ENCODE measurements at regions of chr5 and their contacts with region 1.

Region 1: GRCh38 chr5:54243473-54244080 is 66.8 kb downstream of the ARL15 start:
- DNase-seq: peak; percentile 27
- CTCF ChIP-seq: peak; percentile 71

Region 2: GRCh38 chr5:54229041-54229780 is 14.4 kb before region 1 on chr5:
- CTCF ChIA-PET with region 1: interaction called, 17 read pairs
- POLR2A ChIA-PET with region 1: no interaction called
- DNase-seq: peak; percentile 51
- CTCF ChIP-seq: peak; percentile 91

Region 3: DNA sequence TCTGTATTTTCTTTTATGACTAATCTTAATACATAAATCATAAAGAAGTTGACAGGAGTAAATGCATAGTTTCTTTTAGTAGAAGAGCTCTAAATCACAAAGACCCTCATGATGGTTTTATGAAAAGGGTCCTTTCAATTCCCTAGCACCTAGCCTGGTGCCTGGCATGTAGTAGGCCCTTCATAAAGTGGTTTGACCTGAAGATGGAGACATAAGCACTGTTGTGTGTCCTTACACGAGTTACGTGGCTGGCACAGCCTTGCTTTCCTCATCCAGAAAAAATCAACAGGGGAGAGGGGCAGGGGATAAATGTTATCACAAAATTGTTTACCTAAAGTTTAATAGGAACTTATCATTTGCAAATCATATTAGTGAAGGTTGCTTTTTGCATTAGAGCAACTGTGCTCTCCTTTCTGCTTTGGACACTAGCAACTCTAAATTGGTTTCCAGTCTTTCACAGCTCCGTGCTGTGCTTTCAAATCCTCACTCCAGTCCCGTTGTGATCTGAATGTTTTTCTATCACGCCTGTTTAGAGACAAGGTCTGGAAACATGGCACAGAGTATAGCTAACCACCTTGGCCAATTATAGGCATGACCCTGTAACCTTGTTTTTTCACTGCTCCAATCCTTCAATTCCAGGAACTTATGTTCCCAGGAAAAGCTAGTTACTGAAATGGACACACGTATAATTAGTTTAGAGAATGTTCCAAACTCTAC is 11.1 kb after region 1 on chr5:
- CTCF ChIA-PET with region 1: interaction called, 15 read pairs
- POLR2A ChIA-PET with region 1: no interaction called
- DNase-seq: no peak
- CTCF ChIP-seq: no peak

Region 4: DNA sequence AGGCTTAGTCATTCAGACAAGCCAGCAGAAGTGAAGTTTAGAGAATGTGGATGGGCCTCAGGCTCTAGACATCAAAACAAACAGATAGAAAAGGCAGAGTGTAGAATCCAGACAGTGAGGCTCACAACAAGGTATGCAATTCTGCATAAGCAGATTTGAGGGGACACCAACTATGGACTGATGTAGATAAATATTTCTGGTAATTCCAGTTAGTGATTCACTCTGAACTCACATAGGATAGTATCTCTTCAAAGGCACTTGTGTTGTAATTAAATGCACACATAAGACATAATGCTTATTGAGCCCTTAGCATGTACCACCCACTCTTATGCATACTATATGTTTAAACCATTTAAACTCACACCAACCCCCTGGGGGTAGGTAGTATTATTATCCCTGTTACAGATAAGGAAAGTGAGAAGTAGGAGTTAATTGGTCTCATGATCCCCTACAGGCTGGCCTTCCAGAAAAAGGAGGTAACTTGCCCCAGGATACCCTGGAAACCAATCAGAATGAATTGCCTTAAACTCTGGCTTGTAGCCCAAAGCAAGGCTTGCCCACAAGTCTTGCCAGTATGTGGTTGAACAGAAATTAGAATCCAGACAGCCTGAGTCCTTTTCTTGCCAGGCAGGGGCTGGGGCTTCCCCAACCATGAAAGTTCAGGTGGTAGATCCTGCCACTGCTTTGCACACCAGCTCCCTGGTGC is 172.5 kb after region 1 on chr5:
- CTCF ChIA-PET with region 1: interaction called, 13 read pairs
- POLR2A ChIA-PET with region 1: no interaction called
- DNase-seq: no peak
- CTCF ChIP-seq: no peak

Region 5: GRCh38 chr5:54425258-54425657 is 181.7 kb after region 1 on chr5:
- CTCF ChIA-PET with region 1: interaction called, 13 read pairs
- POLR2A ChIA-PET with region 1: no interaction called
- DNase-seq: no peak
- CTCF ChIP-seq: no peak